Heart left ventricle (tissue), 16 donors: ENCODE measurements at regions of chr11 and their contacts with region 1.

Region 1: DNA sequence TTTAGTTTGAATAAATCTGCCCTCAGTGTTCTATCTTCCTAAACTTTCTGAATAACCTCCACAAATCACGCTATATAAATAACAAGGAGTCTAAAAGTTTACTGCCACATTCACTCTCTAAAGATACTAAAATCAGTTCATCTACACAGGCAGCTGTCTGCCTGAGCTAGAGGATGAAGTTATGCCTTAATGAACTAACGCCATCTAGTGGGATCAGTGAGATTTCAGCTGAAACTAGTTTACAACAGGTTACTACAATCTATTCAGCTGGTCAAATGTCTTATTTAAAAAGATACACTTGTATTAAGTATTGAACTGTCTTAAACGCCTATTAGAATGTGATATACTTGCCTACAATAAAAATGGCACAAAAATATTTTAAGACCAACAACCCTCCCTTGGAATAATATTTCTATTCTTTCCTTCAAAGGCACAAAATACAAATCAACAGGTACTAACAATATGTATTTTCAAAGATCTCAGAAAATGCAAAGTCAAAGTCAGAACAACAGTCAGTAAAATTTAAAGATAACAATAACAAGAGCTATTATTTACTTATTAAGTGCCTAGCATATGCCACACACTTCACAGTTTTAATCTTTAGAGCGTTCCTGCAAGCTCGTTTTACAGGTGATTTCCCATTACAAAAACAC is 84.1 kb downstream of the LARGE2 start:
- DNase-seq: peak in 1 of 5 donors; percentile 26
- ATAC-seq: peak; percentile 58 to 83 (median 76)
- H3K4me3 ChIP-seq: no peak overlapping the region
- H3K27ac ChIP-seq: no peak overlapping the region
- H3K4me1 ChIP-seq: peaks cover 0 to 31% (median 10%) of the 10 kb centered on the region in 12 donors
- H3K27me3 ChIP-seq: no peaks in the 10 kb centered on the region
- CTCF ChIP-seq: peak; percentile 67 to 85 (median 79)
- POLR2A ChIP-seq: no peak

Region 2: DNA sequence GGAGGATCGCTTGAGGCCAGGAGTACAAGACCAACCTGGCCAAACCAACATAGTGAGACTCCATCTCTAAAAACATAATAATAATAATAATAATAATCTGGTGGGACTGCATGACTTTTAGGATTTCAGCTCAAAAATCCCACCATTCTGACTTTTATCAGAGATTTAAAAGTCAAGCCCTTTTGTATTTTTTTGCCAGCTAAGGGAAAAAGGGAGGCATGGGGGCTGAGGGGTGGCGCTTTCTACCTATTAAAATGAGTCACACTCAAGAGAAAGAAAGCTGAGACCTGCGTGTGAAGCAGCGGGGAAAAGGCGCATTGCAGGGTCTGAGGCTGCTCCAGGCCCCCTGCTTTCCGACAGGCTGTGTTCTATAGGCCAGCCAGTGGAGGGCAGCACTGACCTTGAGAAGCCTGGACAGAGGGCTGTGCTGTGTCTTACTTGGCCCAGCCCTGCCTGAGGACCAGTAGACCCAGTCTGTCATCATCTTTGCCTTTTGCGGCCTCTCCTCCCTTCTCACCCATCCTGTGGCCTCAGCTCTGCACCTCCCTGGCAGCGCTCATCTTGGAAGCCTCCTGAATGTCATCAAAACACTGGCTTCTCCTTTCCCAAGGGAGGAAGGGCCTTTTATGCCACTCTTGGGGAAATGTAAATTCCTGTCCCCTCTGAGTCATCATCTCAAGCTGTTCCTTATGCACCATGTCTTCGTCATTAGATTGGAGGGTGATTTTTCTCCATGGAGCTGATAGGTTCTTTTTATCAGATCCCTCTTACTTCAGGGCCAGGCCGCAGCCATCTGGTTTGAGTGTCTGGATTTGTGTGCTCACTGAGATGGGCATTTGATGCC is 133.8 kb before region 1 on chr11:
- intact Hi-C with region 1: loop called in 2 of 10 experiments (anchors 10 kb)
- DNase-seq: peak in 2 of 5 donors; percentile 51 to 57
- ATAC-seq: peak in 3 of 4 donors; percentile 71 to 74 (median 72)
- H3K4me3 ChIP-seq: no peak overlapping the region
- H3K27ac ChIP-seq: no peak overlapping the region
- H3K4me1 ChIP-seq: peaks cover 0 to 14% (median 0%) of the 10 kb centered on the region in 12 donors
- H3K27me3 ChIP-seq: no peaks in the 10 kb centered on the region
- CTCF ChIP-seq: peak; percentile 44 to 70 (median 60)
- POLR2A ChIP-seq: no peak

Region 3: DNA sequence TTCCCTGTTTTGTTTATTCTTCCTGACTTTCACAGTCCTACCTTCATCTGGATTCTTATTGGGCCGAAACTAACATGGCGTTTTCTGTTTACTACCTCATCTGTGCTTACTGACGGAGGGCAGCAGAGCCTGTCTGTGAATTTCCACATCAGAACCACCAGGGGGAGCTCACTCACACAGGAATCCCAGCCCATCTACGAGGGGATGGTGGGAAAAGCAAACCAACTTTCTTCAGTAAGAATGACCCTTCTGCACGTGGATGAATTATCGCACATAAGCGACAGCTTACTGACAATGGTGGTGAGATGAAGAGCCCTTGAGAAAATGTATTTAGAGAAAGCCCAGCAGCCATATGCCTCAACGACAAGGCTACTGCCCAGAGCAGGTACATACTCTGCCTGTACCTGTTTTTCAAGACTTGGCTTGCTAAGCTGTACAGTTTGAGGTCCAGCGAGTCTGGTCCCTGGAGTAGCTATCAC is 41.6 kb before region 1 on chr11:
- intact Hi-C with region 1: loop called (anchors 1 to 5 kb)
- DNase-seq: peak in 4 of 5 donors; percentile 35 to 63 (median 52)
- ATAC-seq: peak; percentile 68 to 93 (median 88)
- H3K4me3 ChIP-seq: no peak overlapping the region
- H3K27ac ChIP-seq: peak overlapping the region in 2 of 12 donors; percentile 13
- H3K4me1 ChIP-seq: peaks cover 0 to 18% (median 4%) of the 10 kb centered on the region in 12 donors
- H3K27me3 ChIP-seq: no peaks in the 10 kb centered on the region
- CTCF ChIP-seq: peak; percentile 86 to 97 (median 89)
- POLR2A ChIP-seq: no peak